Activated T-helper 2 cell treated with anti-CD3 and anti-CD28 coated beads, Interferon-gamma antibody, Interleukin-2, Interleukin-4, amounts not matched to agents 10 μg/mL and 5 μg/mL and 100 μg/mL, durations not matched to agents 14 hours and 24 hours and 36 hours (primary cell): ENCODE measurements at regions of chr11 and their contacts with region 1.

Region 1: DNA sequence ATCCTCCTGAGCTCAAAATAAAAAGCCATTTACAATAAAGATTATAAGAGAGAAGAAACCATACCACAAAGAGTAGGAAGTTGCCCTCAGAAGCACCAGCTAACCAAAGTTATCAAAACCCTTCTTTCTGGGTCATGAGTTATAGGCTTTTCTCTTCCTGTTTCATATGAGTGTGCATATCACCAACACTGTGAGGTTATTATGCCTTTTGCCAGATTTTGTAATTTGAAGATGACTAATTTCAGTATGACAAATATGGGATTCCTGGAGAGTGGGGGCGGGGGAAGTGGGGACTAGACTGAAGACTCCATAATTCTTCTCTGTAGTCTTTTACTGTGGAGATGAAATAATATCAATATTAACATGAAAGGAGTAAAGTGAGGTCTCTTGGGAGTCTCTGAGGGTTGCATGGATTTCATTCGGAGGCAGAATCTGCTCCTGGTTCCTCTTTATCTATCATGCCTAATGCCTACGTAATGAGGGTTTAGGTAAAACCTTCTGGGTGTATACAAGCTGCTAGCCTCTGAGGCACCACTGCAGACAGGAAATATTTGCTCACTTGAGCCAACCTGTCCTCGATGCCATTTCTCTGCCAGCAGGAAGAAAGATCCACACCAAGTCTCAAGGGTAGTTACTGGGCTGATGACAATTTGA is 2.1 kb downstream of the LPXN start:
- DNase-seq: peak; percentile 20
- H3K4me3 Mint-ChIP-seq: peak overlapping the region; percentile 90
- H3K27ac Mint-ChIP-seq: peak overlapping the region; percentile 100
- H3K4me1 Mint-ChIP-seq: peaks cover 45% of the 10 kb centered on the region
- H3K27me3 Mint-ChIP-seq: no peaks in the 10 kb centered on the region

Region 2: DNA sequence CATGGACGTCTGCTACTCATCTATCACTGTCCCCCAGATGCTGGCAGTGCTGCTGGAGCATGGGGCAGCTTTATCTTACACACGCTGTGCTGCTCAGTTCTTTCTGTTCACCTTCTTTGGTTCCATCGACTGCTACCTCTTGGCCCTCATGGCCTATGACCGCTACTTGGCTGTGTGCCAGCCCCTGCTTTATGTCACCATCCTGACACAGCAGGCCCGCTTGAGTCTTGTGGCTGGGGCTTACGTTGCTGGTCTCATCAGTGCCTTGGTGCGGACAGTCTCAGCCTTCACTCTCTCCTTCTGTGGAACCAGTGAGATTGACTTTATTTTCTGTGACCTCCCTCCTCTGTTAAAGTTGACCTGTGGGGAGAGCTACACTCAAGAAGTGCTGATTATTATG is 393.9 kb before region 1 on chr11:
- intact Hi-C with region 1: no loop called
- DNase-seq: no peak
- H3K4me3 Mint-ChIP-seq: no peak overlapping the region
- H3K27ac Mint-ChIP-seq: no peak overlapping the region
- H3K4me1 Mint-ChIP-seq: no peaks in the 10 kb centered on the region
- H3K27me3 Mint-ChIP-seq: no peaks in the 10 kb centered on the region

Region 3: DNA sequence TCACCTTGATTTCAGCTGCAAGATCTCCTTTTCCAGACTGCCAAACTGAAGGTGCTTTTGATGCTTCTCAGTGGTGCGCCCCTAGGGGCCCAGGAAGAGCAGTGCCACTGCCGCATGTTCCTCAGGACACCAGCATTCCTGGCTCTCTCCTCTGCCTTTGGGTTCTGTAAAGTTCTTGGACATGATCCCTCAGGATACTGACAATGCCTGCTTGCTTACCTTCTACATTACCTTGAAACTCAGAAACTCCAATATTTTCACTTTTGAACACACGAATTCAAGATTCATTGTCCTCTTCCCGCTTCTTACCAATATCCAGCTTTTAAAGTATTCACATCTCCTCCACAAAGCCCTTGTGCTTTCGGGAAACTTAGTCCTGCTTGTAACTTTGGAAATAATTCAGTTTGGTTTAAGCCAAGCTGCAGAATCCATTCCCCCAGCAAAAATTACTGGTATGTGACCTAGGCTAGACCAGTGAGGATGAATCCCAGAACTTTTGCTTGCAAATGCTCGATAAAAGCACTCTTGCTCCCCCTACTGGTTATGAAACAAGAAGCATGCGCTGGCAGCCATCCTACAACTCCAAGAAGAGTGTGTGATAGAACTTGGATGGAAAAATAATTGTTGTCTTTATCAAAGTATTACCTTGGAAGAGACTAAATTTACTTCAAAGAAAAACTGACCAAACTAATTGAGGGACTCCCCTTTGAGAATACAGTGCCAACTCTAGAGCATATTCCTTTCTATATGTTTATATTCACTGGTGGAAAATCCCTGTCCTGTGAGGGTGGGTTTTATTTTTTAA is 49.1 kb before region 1 on chr11:
- intact Hi-C with region 1: loop called (anchors 1 kb)
- DNase-seq: peak; percentile 29
- H3K4me3 Mint-ChIP-seq: peak overlapping the region; percentile 75
- H3K27ac Mint-ChIP-seq: peak overlapping the region; percentile 88
- H3K4me1 Mint-ChIP-seq: peaks cover 48% of the 10 kb centered on the region
- H3K27me3 Mint-ChIP-seq: no peaks in the 10 kb centered on the region

Region 4: DNA sequence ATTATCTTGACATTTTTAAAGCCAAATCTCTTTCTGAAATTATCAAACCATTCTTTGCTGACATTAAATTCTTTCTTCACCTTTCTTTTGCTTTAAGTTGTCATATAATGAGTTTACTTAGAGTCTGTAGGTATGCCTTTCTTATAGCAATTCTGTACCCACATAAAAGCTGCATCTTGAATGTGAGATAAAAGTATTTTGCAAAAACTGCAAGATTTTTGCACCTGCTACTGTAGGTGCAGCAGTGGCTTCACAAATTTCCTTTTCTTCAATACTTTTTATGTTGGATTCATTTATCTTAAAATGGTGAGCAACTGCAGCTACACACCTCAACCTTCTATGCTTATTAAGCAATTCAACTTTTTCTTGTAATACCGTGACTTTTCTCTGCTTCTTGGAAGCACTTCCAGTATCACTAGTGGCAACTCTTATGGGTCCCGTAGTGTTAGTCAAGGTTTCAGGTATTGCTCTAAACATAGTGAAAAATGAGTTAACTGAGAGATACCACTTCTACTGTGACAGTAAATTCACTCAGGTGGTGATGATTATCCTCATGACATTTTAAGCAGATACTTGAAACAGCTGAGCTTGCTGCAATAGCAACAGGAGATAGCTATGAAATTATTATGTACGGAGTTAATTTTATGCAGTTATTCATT is 24.0 kb after region 1 on chr11:
- intact Hi-C with region 1: loop called (anchors 1 kb)
- DNase-seq: no peak
- H3K4me3 Mint-ChIP-seq: no peak overlapping the region
- H3K27ac Mint-ChIP-seq: peak overlapping the region; percentile 20
- H3K4me1 Mint-ChIP-seq: peaks cover 66% of the 10 kb centered on the region
- H3K27me3 Mint-ChIP-seq: no peaks in the 10 kb centered on the region

Region 5: GRCh38 chr11:59142530-59143507 is 569.2 kb after region 1 on chr11 and contains the start of gene FAM111A:
- intact Hi-C with region 1: loop called (anchors 2 kb)
- DNase-seq: peak; percentile 87
- H3K4me3 Mint-ChIP-seq: peak within 1 kb of the TSS; percentile 94
- H3K27ac Mint-ChIP-seq: peak within 1 kb of the TSS; percentile 95
- H3K4me1 Mint-ChIP-seq: peaks cover 57% of the 10 kb centered on the region
- H3K27me3 Mint-ChIP-seq: no peaks in the 10 kb centered on the region
- total RNA-seq, gene FAM111A: 66.2 and 69.1 TPM in 2 replicates